Tibial artery (tissue), 4 donors: ENCODE measurements at regions of chr13 and their contacts with region 1.

Region 1: GRCh38 chr13:60617991-60618733 is 221.1 kb downstream of the TDRD3 start:
- DNase-seq: no peak
- H3K4me3 ChIP-seq: no peak overlapping the region
- H3K27ac ChIP-seq: no peak overlapping the region
- H3K4me1 ChIP-seq: no peaks in the 10 kb centered on the region
- H3K27me3 ChIP-seq: no peaks in the 10 kb centered on the region
- CTCF ChIP-seq: peak in 1 of 2 experiments; percentile 25

Region 2: DNA sequence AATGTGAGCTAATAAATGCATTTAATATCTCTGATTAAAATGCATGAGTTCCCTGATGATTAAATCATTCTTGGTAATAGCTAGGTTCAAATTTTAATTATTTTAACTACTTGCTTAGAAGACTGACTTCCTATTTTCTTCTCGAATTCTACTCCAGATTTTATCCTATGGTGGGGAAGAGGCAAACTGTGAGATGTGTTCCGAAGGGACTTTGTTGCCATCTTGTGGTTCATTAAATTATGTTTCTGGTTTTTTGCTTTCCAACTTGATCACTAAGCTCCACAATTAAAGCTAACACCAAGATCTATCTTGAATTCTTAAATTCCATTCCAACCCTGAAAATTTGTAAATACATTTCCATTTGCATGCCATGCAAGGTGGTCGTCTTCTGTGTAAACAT is 1335.9 kb after region 1 on chr13:
- intact Hi-C with region 1: loop called (anchors 5 kb)
- DNase-seq: no peak
- H3K4me3 ChIP-seq: no peak overlapping the region
- H3K27ac ChIP-seq: no peak overlapping the region
- H3K4me1 ChIP-seq: no peaks in the 10 kb centered on the region
- H3K27me3 ChIP-seq: no peaks in the 10 kb centered on the region
- CTCF ChIP-seq: peak in 1 of 2 experiments; percentile 18